Endothelial cell of umbilical vein (primary cell): ENCODE measurements at regions of chr14 and their contacts with region 1.

Region 1: DNA sequence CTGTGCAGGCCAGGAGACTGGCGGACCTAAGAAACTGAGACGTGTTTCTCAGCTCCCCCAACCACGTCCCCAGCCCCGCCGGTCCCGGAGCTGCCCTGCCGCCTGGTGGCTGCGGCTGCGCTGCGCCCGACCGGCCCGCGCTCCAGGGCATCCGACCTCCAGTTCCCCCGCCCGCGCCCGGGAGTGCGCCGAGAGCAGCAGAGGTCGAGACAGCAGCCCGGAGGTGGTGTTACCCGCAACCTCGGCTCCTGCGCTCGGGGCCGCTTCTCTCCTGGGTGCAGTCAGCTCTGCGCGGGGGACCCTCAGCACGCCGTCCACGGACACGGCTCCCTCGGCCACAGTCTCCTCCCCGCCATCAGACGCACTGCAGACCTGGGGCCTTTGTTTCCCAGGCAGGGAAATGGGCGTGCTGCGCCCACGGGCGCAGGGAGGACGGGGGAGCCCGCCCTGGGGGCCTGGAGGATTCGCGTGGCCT is 21.6 kb upstream of the GPR132 start:
- DNase-seq: peak; percentile 68
- H3K4me3 ChIP-seq: peak overlapping the region; percentile 25 to 39 (median 30)
- H3K27ac ChIP-seq: no peak overlapping the region
- H3K4me1 ChIP-seq: peaks cover 19% of the 10 kb centered on the region
- H3K27me3 ChIP-seq: peaks cover 0 to 2% of the 10 kb centered on the region in 2 experiments
- CTCF ChIP-seq: peak; percentile 82 to 89
- POLR2A ChIP-seq: no peak

Region 2: DNA sequence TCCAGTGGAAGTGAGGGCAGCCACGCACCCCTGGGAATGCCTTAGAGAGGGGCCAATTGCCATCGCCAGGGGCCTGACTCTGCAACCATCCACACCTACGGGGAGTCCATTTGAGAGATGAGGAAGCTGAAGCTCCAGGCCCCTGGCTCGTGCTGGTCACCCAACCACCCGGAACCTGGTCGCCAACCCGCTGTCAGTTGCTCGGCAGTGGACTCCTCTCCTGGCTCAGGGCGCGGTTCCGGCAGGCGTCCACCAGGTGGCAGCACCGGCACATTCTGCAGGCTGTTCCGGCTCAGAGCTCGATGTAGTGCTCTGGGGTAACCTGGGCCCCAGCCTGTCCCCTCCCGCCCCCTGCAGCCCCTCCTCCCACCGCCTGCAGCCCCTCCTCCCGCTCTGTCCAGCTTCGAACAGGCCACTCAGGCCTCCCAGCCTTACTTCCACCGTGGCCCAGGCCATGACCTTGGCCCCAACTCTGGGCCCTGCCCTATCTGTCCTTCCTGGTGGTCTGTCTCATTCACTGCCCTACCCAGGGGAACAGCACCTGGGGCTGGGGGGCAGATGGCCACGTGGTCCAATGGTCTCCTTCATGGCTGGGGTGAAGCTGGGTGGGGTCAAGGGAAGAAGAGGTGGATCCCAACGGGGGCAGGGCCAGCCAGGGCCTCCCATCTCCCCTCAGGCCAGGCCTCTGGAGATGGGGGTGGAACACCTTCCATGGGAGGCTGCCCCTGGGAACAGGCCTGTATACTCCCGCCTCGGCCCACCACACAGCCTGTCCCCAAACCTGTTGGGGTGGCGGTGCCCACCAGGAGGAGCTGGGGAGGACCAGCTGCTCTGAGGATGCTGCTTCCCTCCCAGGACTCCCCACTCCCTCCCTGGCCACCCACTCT is 318.2 kb before region 1 on chr14:
- CTCF ChIA-PET with region 1: interaction called, 12 read pairs
- POLR2A ChIA-PET with region 1: no interaction called
- dilution Hi-C with region 1: no loop called
- intact Hi-C with region 1: no loop called
- DNase-seq: peak; percentile 75
- H3K4me3 ChIP-seq: no peak overlapping the region
- H3K27ac ChIP-seq: no peak overlapping the region
- H3K4me1 ChIP-seq: peaks cover 8% of the 10 kb centered on the region
- H3K27me3 ChIP-seq: no peaks in the 10 kb centered on the region
- CTCF ChIP-seq: peak; percentile 73 to 96
- POLR2A ChIP-seq: no peak

Region 3: DNA sequence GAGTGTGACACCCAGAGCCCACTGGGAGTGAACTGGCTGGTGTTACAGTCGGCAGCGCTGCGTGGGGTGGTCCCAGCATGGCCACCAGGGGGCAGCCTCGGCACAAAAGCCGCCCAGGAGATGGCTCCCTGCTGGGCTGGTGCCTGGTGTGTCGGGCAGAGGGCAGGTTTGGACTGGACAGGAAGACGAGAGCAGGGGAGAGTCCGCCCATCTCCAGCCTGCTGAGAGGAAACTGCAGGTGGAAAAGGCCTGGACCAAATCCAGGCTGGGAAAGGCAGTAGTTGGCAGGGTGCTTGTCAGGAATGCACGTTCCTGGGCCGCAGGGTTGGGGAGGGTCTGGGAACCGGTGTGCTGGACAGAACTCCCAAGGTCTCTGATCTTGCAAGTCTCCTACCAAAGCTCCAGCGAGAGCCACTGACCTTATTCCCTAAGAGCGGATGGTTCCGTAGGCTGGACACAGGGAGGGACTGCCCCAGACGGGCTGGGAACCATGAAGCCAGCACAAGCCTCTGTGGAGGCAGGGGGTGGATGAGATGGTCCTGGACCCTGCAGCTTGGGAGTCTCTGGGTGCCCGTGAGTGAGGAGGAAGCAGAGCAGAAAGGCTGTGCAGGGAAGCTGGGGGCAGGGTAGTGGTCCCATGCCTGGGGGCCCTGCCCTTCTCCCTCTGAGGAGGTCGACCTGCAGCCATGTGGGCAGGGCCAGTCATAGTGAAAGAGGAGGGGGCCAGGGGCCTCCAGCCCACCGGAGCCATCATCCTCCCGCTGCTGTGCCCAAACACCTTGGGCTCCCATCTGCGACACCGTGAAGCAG is 110.5 kb before region 1 on chr14:
- CTCF ChIA-PET with region 1: interaction called, 11 read pairs
- POLR2A ChIA-PET with region 1: no interaction called
- dilution Hi-C with region 1: no loop called
- intact Hi-C with region 1: loop called (anchors 2 kb)
- DNase-seq: peak; percentile 74
- H3K4me3 ChIP-seq: no peak overlapping the region
- H3K27ac ChIP-seq: no peak overlapping the region
- H3K4me1 ChIP-seq: peaks cover 39% of the 10 kb centered on the region
- H3K27me3 ChIP-seq: no peaks in the 10 kb centered on the region
- CTCF ChIP-seq: peak; percentile 90 to 98
- POLR2A ChIP-seq: no peak

Region 4: DNA sequence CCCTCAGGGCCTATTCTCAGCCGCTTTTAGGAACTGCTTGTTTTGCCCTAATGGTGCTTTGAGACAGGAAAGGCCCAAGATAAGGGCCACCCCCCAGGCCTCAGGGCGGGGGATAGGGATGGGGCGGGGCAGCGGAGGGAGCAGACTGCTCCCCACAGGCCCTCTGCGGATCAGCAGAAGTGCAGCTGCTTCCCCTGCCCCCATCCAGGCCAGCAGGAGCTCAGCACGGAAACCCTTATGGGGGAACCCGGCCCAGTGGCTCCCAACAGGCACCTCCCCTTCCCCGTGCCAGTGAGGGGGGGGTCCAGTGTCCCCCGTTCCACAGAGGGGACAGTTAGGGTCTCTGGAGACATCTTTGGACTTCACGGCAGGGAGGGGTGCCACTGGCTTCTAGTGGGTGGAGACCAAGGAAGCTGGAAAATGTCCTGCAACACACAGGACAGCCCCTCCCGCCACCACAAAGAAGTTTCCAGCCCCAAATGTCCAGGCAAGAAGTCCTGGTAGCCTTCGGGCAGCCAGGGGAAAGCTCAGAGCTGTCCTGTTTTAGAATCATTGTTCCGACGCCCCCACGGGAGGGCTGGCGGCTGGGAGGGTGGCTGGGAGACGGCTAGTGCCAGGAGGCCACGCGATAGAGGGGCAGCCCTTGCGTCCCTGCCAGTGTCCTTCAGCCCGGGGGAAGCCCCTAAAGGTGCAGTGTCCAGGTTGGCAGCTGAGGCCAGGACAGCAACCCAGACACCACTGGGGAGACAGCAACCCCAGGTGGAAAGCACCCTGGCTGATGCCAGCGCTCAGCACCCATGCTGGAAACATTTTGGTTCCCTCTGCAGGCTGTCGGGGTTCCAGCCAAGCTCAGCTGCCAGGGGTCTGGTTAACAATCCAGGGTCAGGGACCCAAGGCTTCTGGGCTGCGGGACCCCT is 11.2 kb before region 1 on chr14:
- CTCF ChIA-PET with region 1: interaction called, 17 read pairs
- POLR2A ChIA-PET with region 1: no interaction called
- dilution Hi-C with region 1: no loop called
- intact Hi-C with region 1: no loop called
- DNase-seq: no peak
- H3K4me3 ChIP-seq: no peak overlapping the region
- H3K27ac ChIP-seq: no peak overlapping the region
- H3K4me1 ChIP-seq: no peaks in the 10 kb centered on the region
- H3K27me3 ChIP-seq: no peaks in the 10 kb centered on the region
- CTCF ChIP-seq: no peak
- POLR2A ChIP-seq: no peak

Region 5: DNA sequence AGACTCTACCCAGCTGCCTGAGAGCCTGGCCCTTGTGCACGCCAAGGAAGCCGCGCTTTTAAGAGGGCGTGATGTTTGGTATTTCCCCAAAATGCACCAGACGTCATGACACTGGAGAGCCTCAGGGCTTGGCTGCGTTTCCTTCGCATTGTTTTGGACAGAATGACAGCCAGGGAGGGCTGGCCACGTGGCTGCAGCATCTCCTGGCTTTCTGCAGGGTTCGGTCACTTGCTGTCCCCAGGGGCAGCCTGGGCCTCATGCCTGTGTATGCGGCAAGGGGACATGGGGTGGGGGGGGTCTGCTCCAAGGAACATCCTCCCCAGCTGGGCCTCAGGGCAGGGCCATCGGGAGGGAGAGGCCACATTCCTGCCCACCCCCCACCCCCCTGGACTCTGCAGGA is 110.4 kb after region 1 on chr14:
- CTCF ChIA-PET with region 1: interaction called, 23 read pairs
- POLR2A ChIA-PET with region 1: no interaction called
- dilution Hi-C with region 1: no loop called
- intact Hi-C with region 1: loop called (anchors 2 kb)
- DNase-seq: no peak
- H3K4me3 ChIP-seq: no peak overlapping the region
- H3K27ac ChIP-seq: peak overlapping the region; percentile 87
- H3K4me1 ChIP-seq: peaks cover 72% of the 10 kb centered on the region
- H3K27me3 ChIP-seq: no peaks in the 10 kb centered on the region
- CTCF ChIP-seq: no peak
- POLR2A ChIP-seq: no peak

Region 6: GRCh38 chr14:105281371-105282097 is 194.7 kb after region 1 on chr14:
- CTCF ChIA-PET with region 1: interaction called, 16 read pairs
- POLR2A ChIA-PET with region 1: no interaction called
- dilution Hi-C with region 1: no loop called
- intact Hi-C with region 1: no loop called
- DNase-seq: peak; percentile 61
- H3K4me3 ChIP-seq: no peak overlapping the region
- H3K27ac ChIP-seq: no peak overlapping the region
- H3K4me1 ChIP-seq: peaks cover 11% of the 10 kb centered on the region
- H3K27me3 ChIP-seq: no peaks in the 10 kb centered on the region
- CTCF ChIP-seq: peak; percentile 63 to 67
- POLR2A ChIP-seq: no peak

Region 7: DNA sequence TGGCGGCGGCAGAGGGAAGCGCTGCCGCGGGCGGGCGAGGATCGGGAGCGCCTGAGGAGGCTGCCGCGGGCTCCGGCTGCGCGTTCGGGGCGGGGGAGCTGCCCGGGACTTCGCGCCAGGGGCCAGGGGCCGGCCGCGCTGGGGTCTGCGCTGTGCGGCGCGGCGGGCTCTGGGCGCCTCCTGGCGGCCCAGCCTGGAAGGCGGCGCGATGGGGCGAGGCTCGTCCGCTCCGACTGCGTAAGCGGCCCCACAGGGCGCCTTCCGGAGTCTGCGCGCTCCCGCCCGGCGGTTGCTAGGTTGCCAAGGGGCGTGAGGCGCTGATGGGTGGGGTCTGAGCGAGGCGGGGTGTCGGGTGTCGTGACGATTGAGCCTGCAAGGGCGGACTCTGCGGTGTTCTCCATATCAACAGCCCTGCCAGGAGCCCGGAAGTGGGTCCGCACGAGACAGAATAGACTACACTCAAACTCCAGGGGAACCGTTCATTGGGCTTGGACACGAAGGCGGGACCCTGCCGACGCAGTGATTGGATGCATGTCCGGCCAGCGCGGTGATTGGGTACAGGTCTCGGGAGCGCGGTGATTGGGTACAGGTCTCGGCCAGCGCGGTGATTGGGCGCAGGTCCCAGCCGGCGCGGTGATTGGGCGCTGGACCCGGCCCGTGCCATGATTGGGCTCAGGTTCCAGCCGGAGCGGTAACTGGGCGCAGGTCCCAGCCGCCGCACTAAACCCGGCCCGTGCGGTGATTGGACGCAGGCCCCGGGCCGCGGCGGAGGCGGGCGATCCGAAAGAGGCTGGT is 403.9 kb after region 1 on chr14 and contains the start of gene TEDC1:
- CTCF ChIA-PET with region 1: interaction called, 12 read pairs
- POLR2A ChIA-PET with region 1: no interaction called
- dilution Hi-C with region 1: no loop called
- intact Hi-C with region 1: loop called (anchors 2 kb)
- DNase-seq: peak; percentile 100
- H3K4me3 ChIP-seq: peak within 1 kb of the TSS; percentile 50 to 67 (median 52)
- H3K27ac ChIP-seq: peak within 1 kb of the TSS; percentile 82
- H3K4me1 ChIP-seq: peaks cover 2% of the 10 kb centered on the region
- H3K27me3 ChIP-seq: peaks cover 0 to 12% of the 10 kb centered on the region in 2 experiments
- CTCF ChIP-seq: peak; percentile 78 to 96
- POLR2A ChIP-seq: peak; percentile 75
- total RNA-seq, gene TEDC1: 25.3 and 29.9 TPM in 2 replicates